ENCODE measurements at regions of chr3 and their contacts with region 1.

Region 1: DNA sequence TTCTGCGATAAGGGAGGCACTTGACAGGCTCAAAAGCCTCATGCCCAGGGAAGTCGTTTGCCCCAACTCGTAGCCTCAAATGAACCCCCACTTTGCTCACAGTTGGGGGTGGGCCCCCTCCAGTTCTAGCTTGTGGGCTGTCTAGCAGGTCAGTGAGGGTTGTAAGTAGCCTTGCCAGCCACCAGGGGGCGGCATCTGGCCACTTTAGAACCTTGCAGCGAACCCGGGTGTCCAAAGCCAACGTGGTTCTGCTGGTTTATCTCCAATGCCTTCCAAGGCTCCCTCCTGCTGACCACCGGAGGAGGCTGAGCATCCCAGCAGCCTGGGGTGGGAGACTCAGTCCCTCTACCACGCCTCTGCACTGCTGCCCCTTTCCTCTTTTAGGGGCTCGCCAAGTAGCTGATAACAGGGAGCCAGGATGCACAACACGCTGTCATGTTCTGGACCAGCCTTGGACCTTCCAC is 9.2 kb upstream of the RBSN start:
- DNase-seq: peak; percentile 75
- H3K4me3 Mint-ChIP-seq: no peak overlapping the region
- H3K27ac Mint-ChIP-seq: no peak overlapping the region
- H3K4me1 Mint-ChIP-seq: peaks cover 19% of the 10 kb centered on the region
- H3K27me3 Mint-ChIP-seq: no peaks in the 10 kb centered on the region
- CTCF ChIP-seq: peak; percentile 94

Region 2: DNA sequence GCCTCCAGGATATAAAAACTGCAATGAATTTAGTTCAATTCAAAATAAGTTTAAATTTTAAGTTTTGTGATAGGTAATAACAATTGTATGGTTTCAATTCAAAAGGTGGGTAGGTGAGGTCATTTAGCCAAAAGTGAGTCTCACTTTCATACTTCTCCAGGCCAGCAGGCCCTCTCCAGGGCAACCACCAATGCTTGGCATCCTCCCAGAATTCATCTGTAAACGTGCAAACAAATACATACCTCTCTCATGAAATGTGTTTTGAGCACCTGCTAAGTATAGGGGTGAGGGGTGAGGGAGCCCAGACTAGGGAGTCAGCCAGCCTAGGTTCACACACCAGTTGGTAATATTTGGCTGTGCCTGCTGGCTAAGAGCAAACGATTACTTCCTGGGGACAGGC is 12.9 kb after region 1 on chr3:
- CTCF ChIA-PET with region 1: interaction called, 71 read pairs
- POLR2A ChIA-PET with region 1: interaction called, 3 read pairs
- intact Hi-C with region 1: no loop called
- DNase-seq: no peak
- H3K4me3 Mint-ChIP-seq: no peak overlapping the region
- H3K27ac Mint-ChIP-seq: no peak overlapping the region
- H3K4me1 Mint-ChIP-seq: no peaks in the 10 kb centered on the region
- H3K27me3 Mint-ChIP-seq: no peaks in the 10 kb centered on the region
- CTCF ChIP-seq: no peak

Region 3: GRCh38 chr3:15199493-15200105 is 91.5 kb after region 1 on chr3:
- CTCF ChIA-PET with region 1: interaction called, 121 read pairs
- POLR2A ChIA-PET with region 1: interaction called, 12 read pairs
- intact Hi-C with region 1: loop called (anchors 2 kb)
- DNase-seq: no peak
- H3K4me3 Mint-ChIP-seq: no peak overlapping the region
- H3K27ac Mint-ChIP-seq: no peak overlapping the region
- H3K4me1 Mint-ChIP-seq: no peaks in the 10 kb centered on the region
- H3K27me3 Mint-ChIP-seq: peaks cover 27% of the 10 kb centered on the region
- CTCF ChIP-seq: no peak

Region 4: GRCh38 chr3:15377961-15378791 is 270.1 kb after region 1 on chr3:
- CTCF ChIA-PET with region 1: interaction called, 3 read pairs
- POLR2A ChIA-PET with region 1: no interaction called
- intact Hi-C with region 1: loop called (anchors 10 kb)
- DNase-seq: peak; percentile 96
- H3K4me3 Mint-ChIP-seq: no peak overlapping the region
- H3K27ac Mint-ChIP-seq: no peak overlapping the region
- H3K4me1 Mint-ChIP-seq: no peaks in the 10 kb centered on the region
- H3K27me3 Mint-ChIP-seq: no peaks in the 10 kb centered on the region
- CTCF ChIP-seq: peak; percentile 86

Region 5: DNA sequence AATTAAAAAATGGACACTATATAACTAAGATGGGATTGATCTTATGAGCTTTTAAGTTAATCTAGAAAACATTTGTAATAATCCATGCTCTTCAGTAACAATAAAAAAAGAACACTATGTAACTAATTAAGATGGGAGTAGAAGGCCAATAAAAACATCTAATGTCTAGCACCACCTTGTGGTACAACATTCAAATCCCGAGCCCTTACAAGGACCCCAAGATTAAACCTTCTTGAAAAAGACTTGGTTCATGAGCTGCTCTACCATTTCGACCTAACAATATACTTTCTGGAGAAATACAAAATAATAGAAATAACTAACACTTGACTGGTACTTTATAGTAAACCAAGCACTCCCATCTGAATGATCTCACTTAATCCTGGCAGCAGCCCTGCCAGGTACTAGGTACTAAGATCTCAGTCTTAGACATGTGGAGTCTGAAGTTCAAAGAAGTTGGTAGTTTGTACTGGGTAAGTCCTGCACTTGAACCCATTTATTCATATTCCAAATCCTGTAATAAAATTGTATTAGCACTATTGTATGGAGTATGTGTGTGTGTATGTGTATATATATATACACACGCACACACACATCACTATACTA is 297.4 kb after region 1 on chr3:
- CTCF ChIA-PET with region 1: interaction called, 19 read pairs
- POLR2A ChIA-PET with region 1: no interaction called
- intact Hi-C with region 1: loop called (anchors 2 kb)
- DNase-seq: peak; percentile 59
- H3K4me3 Mint-ChIP-seq: no peak overlapping the region
- H3K27ac Mint-ChIP-seq: no peak overlapping the region
- H3K4me1 Mint-ChIP-seq: no peaks in the 10 kb centered on the region
- H3K27me3 Mint-ChIP-seq: no peaks in the 10 kb centered on the region
- CTCF ChIP-seq: peak; percentile 57

Region 6: GRCh38 chr3:15557511-15557946 is 449.4 kb after region 1 on chr3:
- CTCF ChIA-PET with region 1: interaction called, 3 read pairs
- POLR2A ChIA-PET with region 1: no interaction called
- intact Hi-C with region 1: loop called (anchors 1 kb)
- DNase-seq: peak; percentile 82
- H3K4me3 Mint-ChIP-seq: no peak overlapping the region
- H3K27ac Mint-ChIP-seq: no peak overlapping the region
- H3K4me1 Mint-ChIP-seq: peaks cover 5% of the 10 kb centered on the region
- H3K27me3 Mint-ChIP-seq: no peaks in the 10 kb centered on the region
- CTCF ChIP-seq: peak; percentile 66